ENCODE measurements at regions of chr5 and their contacts with region 1.

Region 1: DNA sequence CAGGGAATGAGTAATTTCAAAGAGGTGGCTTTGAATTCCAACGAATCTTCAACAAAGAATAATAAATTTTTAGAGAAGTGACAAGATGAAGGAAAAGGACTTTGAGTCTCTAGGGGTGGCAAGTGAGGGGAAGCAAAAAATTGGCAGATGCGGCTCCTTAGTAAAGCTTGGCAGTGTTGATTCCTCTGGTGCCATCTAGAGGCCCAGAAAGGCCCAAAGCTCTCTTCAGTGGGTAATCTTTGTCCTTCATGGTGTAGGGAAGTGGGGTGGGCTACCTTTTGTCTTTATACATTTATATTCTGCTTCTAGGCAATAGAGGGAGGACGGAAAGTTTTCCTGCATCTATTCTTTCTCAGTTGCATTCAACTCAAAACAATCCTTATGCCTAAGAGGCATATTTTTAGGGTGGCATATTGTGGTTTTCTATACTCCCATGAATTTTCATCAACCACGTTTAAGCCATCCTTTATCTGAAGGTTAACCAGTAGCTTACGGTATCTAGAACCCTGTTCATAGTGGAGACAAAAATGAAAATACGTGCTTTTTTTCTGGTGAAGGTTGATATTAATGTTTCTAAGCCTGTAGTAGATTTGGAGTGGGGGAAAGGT is 17.5 kb upstream of the ROPN1L start:
- DNase-seq: no peak
- H3K4me3 ChIP-seq: no peak overlapping the region
- H3K27ac ChIP-seq: no peak overlapping the region
- H3K4me1 ChIP-seq: peaks cover 0 to 2% (median 0%) of the 10 kb centered on the region in 4 experiments; a peak in 1 of 7 replicates
- H3K27me3 ChIP-seq: no peaks in the 10 kb centered on the region
- CTCF ChIP-seq: peak in 2 of 3 experiments; percentile 60 to 62; a peak in 3 of 4 replicates
- EP300 ChIP-seq: no peak
- POLR2A ChIP-seq: no peak
- RAD21 ChIP-seq: peak; percentile 65 to 70

Region 2: DNA sequence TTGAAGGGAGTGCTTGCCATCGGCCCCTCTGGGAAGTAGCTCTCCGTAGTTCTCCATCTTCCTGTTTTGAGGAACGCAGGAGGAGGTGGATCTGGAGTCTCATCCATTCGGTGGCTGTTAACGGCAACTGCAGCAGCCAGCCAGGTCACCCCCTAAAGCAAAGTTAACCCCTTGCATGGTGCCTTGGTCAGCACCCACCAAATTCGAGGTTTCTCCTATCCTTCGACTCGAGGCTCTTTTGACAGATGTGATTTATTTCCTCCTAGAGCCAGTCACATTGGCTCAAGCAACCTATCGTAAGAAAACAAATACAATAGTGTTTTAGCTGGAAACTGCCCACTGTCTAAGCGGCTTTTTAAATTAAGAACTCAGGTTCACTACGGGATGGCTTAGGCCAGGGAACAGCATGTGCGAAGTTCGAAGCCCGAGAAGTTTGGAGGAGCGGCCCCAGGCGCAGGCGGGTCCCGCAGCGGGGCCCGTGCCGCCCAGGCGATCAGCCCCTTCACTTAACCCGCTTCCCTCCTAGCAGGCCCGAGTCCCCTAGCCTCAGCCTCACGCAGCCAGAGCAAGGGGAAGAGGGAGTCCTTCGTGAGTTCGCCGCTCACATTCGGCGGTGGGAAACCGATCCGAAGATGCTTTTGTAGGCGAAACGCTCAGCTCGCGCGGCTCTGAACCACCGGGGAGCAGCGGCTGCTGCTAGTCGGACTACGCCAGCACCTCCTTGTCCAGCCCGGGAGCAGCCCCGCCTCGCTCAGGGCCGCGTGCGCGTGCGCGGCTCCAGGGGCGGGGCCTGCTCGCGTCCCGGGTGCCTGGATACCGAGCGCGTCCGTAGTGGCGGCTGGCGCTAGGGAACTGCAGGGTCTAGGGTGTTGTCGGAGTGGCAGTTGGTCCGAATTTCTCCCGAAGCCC is 17.1 kb after region 1 on chr5 and contains the start of gene ROPN1L:
- CTCF ChIA-PET with region 1: interaction called, 14 read pairs
- POLR2A ChIA-PET with region 1: interaction called, 3 read pairs
- DNase-seq: peak; percentile 68 to 93
- H3K4me3 ChIP-seq: peak within 1 kb of the TSS; percentile 41 to 83 (median 68)
- H3K27ac ChIP-seq: no peak within 1 kb of the TSS
- H3K4me1 ChIP-seq: peaks cover 0 to 6% (median 4%) of the 10 kb centered on the region in 4 experiments; a peak in 4 of 7 replicates
- H3K27me3 ChIP-seq: peaks cover 0 to 10% (median 6%) of the 10 kb centered on the region in 4 experiments; a peak in 5 of 7 replicates
- CTCF ChIP-seq: peak in 1 of 3 experiments; percentile 14; a peak in 1 of 4 replicates
- EP300 ChIP-seq: no peak
- POLR2A ChIP-seq: peak in 1 of 2 experiments; percentile 66; a peak in 1 of 3 replicates
- RAD21 ChIP-seq: peak in 1 of 2 experiments; percentile 9; a peak in 1 of 4 replicates
- total RNA-seq, gene ROPN1L: 0.38 and 0.73 TPM in 2 replicates

Region 3: GRCh38 chr5:10471677-10472076 is 47.4 kb after region 1 on chr5:
- CTCF ChIA-PET with region 1: no interaction called
- POLR2A ChIA-PET with region 1: no interaction called
- DNase-seq: no peak
- H3K4me3 ChIP-seq: no peak overlapping the region
- H3K27ac ChIP-seq: no peak overlapping the region
- H3K4me1 ChIP-seq: peaks cover 5 to 12% (median 8%) of the 10 kb centered on the region in 4 experiments
- H3K27me3 ChIP-seq: 0 out of 7 replicates have a peak, but pooled peaks cover 0 to 4% (median 0%) of the 10 kb centered on the region in 4 experiments
- CTCF ChIP-seq: no peak
- EP300 ChIP-seq: no peak
- POLR2A ChIP-seq: no peak
- RAD21 ChIP-seq: no peak

Measured in H1 (cell line).